H1 (cell line): ENCODE measurements at regions of chr11 and their contacts with region 1.

Region 1: GRCh38 chr11:119323538-119324033 is 6.7 kb upstream of the MCAM start:
- DNase-seq: peak in 1 of 2 experiments; percentile 98
- H3K4me3 ChIP-seq: no peak overlapping the region
- H3K27ac ChIP-seq: no peak overlapping the region
- H3K4me1 ChIP-seq: peaks cover 10 to 25% (median 20%) of the 10 kb centered on the region in 4 experiments
- H3K27me3 ChIP-seq: peaks cover 0 to 3% (median 1%) of the 10 kb centered on the region in 4 experiments; a peak in 2 of 7 replicates
- CTCF ChIP-seq: peak in 2 of 3 experiments; percentile 83 to 89; a peak in 3 of 4 replicates
- EP300 ChIP-seq: peak in 1 of 2 experiments; percentile 20; a peak in 1 of 3 replicates
- POLR2A ChIP-seq: no peak
- RAD21 ChIP-seq: peak; percentile 78 to 82

Region 2: DNA sequence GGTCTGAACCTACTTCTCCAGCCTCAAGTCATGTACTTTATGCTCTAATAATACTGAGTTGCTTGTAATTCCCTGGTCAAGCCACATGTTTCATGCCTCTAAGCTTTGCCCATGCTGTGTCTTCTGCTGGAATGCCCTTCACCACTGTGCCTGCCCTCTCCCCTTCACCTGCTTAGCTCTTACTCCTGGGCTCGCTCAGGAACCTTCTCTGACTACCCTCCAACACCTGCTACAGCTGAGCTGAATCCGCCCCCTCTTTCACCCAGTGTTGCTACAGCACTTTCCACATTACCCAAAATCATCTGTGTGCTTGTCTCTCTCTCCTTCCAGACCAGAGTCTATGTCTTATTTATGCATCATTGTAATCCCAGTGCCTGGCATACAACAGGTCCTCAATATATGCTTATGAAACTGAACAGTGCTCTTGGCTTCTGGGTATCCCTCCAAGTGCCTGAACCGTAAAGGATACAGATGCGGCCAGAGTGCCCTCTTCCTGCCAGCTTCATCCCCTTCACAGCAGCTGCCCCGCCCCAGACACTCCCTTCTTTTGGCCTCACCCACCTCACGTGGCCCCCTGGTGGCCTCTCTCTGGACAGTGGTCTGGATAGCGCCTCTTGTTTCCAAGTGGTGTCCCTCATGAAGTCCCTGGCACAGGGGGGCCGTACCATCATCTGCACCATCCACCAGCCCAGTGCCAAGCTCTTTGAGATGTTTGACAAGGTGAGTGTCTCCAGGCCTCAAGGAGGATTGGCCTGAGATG is 167.7 kb before region 1 on chr11:
- CTCF ChIA-PET with region 1: interaction called, 10 read pairs
- POLR2A ChIA-PET with region 1: no interaction called
- DNase-seq: peak in 1 of 2 experiments; percentile 62
- H3K4me3 ChIP-seq: no peak overlapping the region
- H3K27ac ChIP-seq: no peak overlapping the region
- H3K4me1 ChIP-seq: peaks cover 0 to 5% (median 2%) of the 10 kb centered on the region in 4 experiments; a peak in 4 of 7 replicates
- H3K27me3 ChIP-seq: peaks cover 0 to 4% (median 3%) of the 10 kb centered on the region in 4 experiments; a peak in 5 of 7 replicates
- CTCF ChIP-seq: peak; percentile 29 to 48 (median 33)
- EP300 ChIP-seq: no peak
- POLR2A ChIP-seq: no peak
- RAD21 ChIP-seq: peak; percentile 10 to 14; a peak in 1 of 4 replicates

Region 3: GRCh38 chr11:119273721-119274120 is 49.9 kb before region 1 on chr11:
- CTCF ChIA-PET with region 1: interaction called, 14 read pairs
- POLR2A ChIA-PET with region 1: no interaction called
- DNase-seq: no peak
- H3K4me3 ChIP-seq: no peak overlapping the region
- H3K27ac ChIP-seq: no peak overlapping the region
- H3K4me1 ChIP-seq: no peaks in the 10 kb centered on the region
- H3K27me3 ChIP-seq: no peaks in the 10 kb centered on the region
- CTCF ChIP-seq: no peak
- EP300 ChIP-seq: no peak
- POLR2A ChIP-seq: no peak
- RAD21 ChIP-seq: no peak

Region 4: GRCh38 chr11:119298726-119299125 is 24.9 kb before region 1 on chr11:
- CTCF ChIA-PET with region 1: interaction called, 174 read pairs
- POLR2A ChIA-PET with region 1: no interaction called
- DNase-seq: no peak
- H3K4me3 ChIP-seq: no peak overlapping the region
- H3K27ac ChIP-seq: no peak overlapping the region
- H3K4me1 ChIP-seq: no peaks in the 10 kb centered on the region
- H3K27me3 ChIP-seq: no peaks in the 10 kb centered on the region
- CTCF ChIP-seq: no peak
- EP300 ChIP-seq: no peak
- POLR2A ChIP-seq: no peak
- RAD21 ChIP-seq: no peak

Region 5: DNA sequence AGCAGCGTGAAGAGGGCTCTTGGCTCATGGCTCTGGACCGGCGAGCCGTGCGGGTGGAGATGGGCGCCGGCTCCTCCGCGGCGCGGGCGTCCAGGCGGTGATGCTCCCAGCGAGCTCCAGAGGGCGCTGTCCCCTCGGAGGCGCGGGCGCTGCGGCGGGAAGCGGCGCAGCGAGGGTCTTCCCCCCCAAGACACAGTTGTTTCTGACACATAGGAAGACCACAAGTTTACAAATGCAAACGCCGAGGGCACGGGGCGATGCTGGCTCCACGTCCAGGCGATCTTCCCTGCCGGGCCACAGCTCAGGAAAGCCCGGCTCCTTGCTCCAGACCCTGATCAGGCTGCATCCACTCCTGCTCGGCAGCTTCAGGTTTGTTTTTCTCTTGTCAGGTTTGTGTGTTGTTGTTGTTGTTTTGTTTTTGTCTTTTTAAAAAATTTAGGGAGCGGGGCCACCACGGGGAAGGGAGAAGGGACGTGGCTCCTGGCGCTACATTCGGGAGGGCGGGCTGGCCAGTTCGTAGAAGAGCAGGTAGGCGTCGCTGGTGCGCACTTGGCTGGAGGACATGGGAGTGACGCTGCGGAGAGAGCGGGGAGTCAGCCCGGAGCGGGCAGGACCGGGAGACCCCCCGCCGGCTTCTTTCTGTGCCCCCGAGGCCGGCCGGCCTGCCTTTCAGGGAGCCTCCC is 32.9 kb after region 1 on chr11:
- CTCF ChIA-PET with region 1: interaction called, 10 read pairs
- POLR2A ChIA-PET with region 1: interaction called, 3 read pairs
- DNase-seq: peak in 1 of 2 experiments; percentile 93
- H3K4me3 ChIP-seq: peak overlapping the region; percentile 26 to 80 (median 76); a peak in 7 of 8 replicates
- H3K27ac ChIP-seq: no peak overlapping the region
- H3K4me1 ChIP-seq: peaks cover 6 to 9% (median 8%) of the 10 kb centered on the region in 4 experiments
- H3K27me3 ChIP-seq: peaks cover 0 to 4% (median under 1%) of the 10 kb centered on the region in 4 experiments; a peak in 3 of 7 replicates
- CTCF ChIP-seq: peak; percentile 77 to 97 (median 93)
- EP300 ChIP-seq: peak in 1 of 2 experiments; percentile 90; a peak in 1 of 3 replicates
- POLR2A ChIP-seq: no peak
- RAD21 ChIP-seq: peak; percentile 74 to 85

Region 6: DNA sequence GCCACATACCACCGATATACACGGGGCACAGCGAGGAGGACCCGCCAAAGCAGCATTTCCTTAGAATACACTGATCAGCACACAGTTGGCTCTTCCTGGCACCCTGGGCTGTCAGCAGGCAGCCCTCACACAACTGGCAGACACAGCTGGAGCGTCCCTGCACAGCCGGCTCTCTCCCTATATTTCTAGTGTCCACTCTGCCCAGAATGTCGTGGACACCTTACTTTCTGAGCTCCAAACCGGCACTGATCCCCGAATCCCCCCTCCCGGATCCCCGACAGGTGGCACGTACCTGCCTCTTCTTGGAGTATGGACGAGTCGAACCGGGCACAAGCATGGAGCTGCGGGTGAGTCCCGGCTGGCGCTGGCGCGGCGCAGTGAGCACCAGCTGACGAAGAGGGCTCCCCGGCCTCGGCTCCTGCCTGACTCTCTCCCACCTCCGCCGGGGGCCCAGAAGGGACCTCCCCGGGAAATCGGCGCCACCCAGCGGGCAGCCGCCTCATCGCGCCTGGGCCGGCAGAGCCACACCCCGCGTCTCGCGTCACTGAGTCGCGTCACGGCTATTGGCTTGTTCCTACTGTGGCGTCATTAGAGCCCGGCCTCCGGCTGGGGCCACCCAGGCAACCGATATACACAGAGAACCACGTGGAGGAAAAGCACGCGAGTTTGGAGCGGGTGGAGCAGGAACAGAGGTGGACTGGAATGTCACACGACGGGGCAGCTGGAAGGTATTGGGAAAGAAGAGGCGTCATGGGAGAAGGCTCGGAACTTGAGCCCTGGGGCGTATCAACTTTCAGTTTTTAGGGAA is 57.8 kb after region 1 on chr11 and contains the start of gene USP2:
- CTCF ChIA-PET with region 1: interaction called, 55 read pairs
- POLR2A ChIA-PET with region 1: interaction called, 3 read pairs
- DNase-seq: peak in 1 of 2 experiments; percentile 99
- H3K4me3 ChIP-seq: peak within 1 kb of the TSS; percentile 62 to 81 (median 66)
- H3K27ac ChIP-seq: peak within 1 kb of the TSS; percentile 53; the same call in 1 of the 2 replicates
- H3K4me1 ChIP-seq: peaks cover 9 to 35% (median 30%) of the 10 kb centered on the region in 4 experiments
- H3K27me3 ChIP-seq: peaks cover 0 to 12% (median 10%) of the 10 kb centered on the region in 4 experiments; a peak in 6 of 7 replicates
- CTCF ChIP-seq: peak; percentile 76 to 81 (median 79)
- EP300 ChIP-seq: no peak
- POLR2A ChIP-seq: peak in 1 of 2 experiments; percentile 18; a peak in 1 of 3 replicates
- RAD21 ChIP-seq: peak; percentile 51 to 62
- total RNA-seq, gene USP2: 6.9 and 8.5 TPM in 2 replicates

Region 7: GRCh38 chr11:119481021-119481666 is 157.6 kb after region 1 on chr11:
- CTCF ChIA-PET with region 1: interaction called, 14 read pairs
- POLR2A ChIA-PET with region 1: no interaction called
- DNase-seq: peak in 1 of 2 experiments; percentile 100
- H3K4me3 ChIP-seq: peak overlapping the region in 2 of 4 experiments; percentile 19 to 50; a peak in 3 of 8 replicates
- H3K27ac ChIP-seq: no peak overlapping the region
- H3K4me1 ChIP-seq: 0 out of 7 replicates have a peak, but pooled peaks cover 0 to 2% (median 0%) of the 10 kb centered on the region in 4 experiments
- H3K27me3 ChIP-seq: no peaks in the 10 kb centered on the region; a peak in 2 of 7 replicates
- CTCF ChIP-seq: peak; percentile 95 to 98 (median 98)
- EP300 ChIP-seq: no peak
- POLR2A ChIP-seq: no peak
- RAD21 ChIP-seq: peak; percentile 97 to 98